Common myeloid progenitor, CD34-positive (primary cell): ENCODE measurements at regions of chr2 and their contacts with region 1.

Region 1: DNA sequence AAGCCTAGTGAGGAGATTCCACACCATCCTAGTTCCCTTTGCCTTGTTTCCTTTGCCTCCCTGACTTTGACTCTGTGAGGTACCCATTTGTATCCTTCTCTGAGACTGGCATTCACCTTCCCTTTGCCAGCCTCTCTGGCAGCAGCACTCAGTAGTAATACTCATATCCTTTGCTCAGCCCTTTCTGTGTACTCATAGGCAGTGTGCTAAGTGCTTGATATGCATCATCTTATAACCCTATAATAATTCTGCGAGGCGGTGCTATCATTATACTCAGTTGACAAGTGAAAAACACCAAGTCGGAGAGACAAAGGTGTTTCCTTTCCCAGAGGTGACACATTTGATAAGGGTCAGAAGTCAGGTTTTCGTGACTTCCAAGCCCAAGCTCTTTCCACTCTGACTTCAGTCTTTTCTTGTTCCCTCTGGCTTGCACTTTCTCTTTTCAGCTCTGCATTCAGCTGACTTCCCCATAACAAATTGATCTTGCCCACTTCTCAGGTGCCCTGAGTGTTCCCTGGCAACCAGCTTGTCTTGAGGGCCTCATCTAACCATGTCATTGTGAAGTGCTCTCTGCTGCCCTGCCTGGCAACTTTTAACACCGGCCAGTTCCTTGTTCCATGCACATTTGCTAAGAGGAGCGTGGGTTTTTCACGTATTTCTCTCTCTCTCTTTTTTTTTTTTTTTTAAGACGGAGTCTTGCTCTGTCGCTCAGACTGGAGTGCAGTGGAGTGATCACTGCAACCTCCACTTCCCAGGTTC is 94.5 kb upstream of the UPP2 start:
- DNase-seq: peak; percentile 87 to 96 (median 93)
- H3K4me3 ChIP-seq: peak overlapping the region in 1 of 7 experiments; percentile 39
- H3K27ac ChIP-seq: no peak overlapping the region
- H3K4me1 ChIP-seq: peaks cover 0 to 24% (median 9%) of the 10 kb centered on the region in 4 experiments
- H3K27me3 ChIP-seq: no peaks in the 10 kb centered on the region

Region 2: DNA sequence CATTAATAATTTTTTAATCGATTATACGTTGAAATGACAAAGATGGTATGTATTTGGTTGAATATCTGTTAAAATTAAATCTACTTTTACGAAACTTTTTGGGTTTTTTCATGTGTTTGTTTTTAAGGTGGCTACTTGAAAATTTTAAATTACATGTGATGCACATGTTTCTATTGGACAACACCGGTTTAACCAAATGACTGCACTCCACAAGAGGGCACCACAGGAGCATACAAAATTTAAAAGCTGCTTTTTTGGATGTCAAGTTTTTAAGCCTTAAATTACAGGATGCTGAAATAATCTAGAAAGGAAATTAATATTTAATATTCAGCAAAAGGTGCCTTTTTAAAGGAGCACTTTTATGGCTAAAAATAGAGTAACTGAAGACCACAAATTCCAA is 229.7 kb before region 1 on chr2:
- CTCF ChIA-PET with region 1: interaction called, 64 read pairs
- POLR2A ChIA-PET with region 1: no interaction called
- DNase-seq: peak; percentile 56 to 80 (median 75)
- H3K4me3 ChIP-seq: no peak overlapping the region
- H3K27ac ChIP-seq: no peak overlapping the region
- H3K4me1 ChIP-seq: peaks cover 0 to 8% (median 4%) of the 10 kb centered on the region in 4 experiments
- H3K27me3 ChIP-seq: no peaks in the 10 kb centered on the region

Region 3: GRCh38 chr2:157887946-157888345 is 119.2 kb before region 1 on chr2:
- CTCF ChIA-PET with region 1: no interaction called
- POLR2A ChIA-PET with region 1: no interaction called
- DNase-seq: no peak
- H3K4me3 ChIP-seq: no peak overlapping the region
- H3K27ac ChIP-seq: no peak overlapping the region
- H3K4me1 ChIP-seq: peaks cover 0 to 6% (median 3%) of the 10 kb centered on the region in 4 experiments
- H3K27me3 ChIP-seq: no peaks in the 10 kb centered on the region

Region 4: GRCh38 chr2:157984866-157985265 is 22.3 kb before region 1 on chr2:
- CTCF ChIA-PET with region 1: no interaction called
- POLR2A ChIA-PET with region 1: no interaction called
- DNase-seq: no peak
- H3K4me3 ChIP-seq: no peak overlapping the region
- H3K27ac ChIP-seq: no peak overlapping the region
- H3K4me1 ChIP-seq: no peaks in the 10 kb centered on the region
- H3K27me3 ChIP-seq: no peaks in the 10 kb centered on the region

Region 5: GRCh38 chr2:157995117-157995516 is 12.0 kb before region 1 on chr2:
- CTCF ChIA-PET with region 1: interaction called, 19 read pairs
- POLR2A ChIA-PET with region 1: no interaction called
- DNase-seq: no peak
- H3K4me3 ChIP-seq: no peak overlapping the region
- H3K27ac ChIP-seq: no peak overlapping the region
- H3K4me1 ChIP-seq: no peaks in the 10 kb centered on the region
- H3K27me3 ChIP-seq: no peaks in the 10 kb centered on the region

Region 6: GRCh38 chr2:158321264-158321663 is 314.1 kb after region 1 on chr2:
- CTCF ChIA-PET with region 1: no interaction called
- POLR2A ChIA-PET with region 1: no interaction called
- DNase-seq: no peak
- H3K4me3 ChIP-seq: no peak overlapping the region
- H3K27ac ChIP-seq: no peak overlapping the region
- H3K4me1 ChIP-seq: peaks cover 0 to 1% (median under 1%) of the 10 kb centered on the region in 4 experiments
- H3K27me3 ChIP-seq: no peaks in the 10 kb centered on the region